ENCODE measurements at regions of chr16 and their contacts with region 1.

Region 1: GRCh38 chr16:53829186-53829747 is 125.3 kb downstream of the FTO start:
- DNase-seq: no peak
- H3K4me3 ChIP-seq: no peak overlapping the region
- H3K27ac ChIP-seq: peak overlapping the region; percentile 54 to 74
- H3K4me1 ChIP-seq: peaks cover 0 to 10% of the 10 kb centered on the region in 2 donors
- H3K27me3 ChIP-seq: no peaks in the 10 kb centered on the region
- CTCF ChIP-seq: no peak
- POLR2A ChIP-seq: no peak

Region 2: DNA sequence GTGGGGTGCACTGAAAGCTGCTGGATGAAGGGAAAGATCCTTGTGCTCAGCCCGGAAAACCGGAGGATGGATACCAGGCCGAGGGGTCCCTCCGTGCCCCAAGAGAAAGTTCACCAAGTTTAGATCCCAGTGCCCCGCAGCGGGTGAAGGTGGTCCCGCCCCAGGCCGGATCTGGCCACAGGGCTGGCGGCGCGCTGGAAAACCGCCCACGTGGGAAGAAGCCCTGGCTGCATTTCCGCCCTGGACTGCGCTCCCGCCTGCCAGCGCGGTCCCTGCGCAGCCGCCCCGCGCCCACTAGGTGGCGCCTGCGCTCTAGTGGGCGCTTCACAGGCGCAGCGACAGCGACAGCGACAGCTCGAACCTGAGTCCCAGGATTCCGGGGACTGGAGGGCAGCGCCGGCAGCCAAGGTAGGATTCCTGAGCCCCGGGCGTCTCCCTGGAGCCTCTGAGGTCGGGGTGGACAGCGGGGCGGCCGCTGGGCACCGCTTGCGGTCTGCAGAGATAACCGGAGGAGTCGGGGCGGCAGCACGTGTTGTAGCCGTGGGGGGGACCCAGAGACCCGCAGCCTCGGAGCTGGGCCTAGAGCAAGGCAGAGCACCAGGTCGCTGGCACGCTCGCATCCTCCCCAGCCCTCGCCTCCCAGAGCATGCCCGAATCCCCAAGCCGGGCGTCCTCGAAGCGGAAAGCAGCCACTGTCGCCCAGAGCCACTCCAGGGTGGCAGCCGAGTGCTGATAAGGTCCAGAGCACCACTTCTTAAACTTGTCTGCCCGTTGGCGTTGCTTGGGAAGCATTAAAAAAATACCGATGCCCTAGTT is 774.4 kb before region 1 on chr16 and contains the start of gene CHD9:
- intact Hi-C with region 1: loop called (anchors 5 kb)
- DNase-seq: peak; percentile 68 to 72
- H3K4me3 ChIP-seq: peak within 1 kb of the TSS; percentile 62 to 77 (median 76)
- H3K27ac ChIP-seq: peak within 1 kb of the TSS; percentile 91 to 92
- H3K4me1 ChIP-seq: no peaks in the 10 kb centered on the region
- H3K27me3 ChIP-seq: no peaks in the 10 kb centered on the region
- CTCF ChIP-seq: peak; percentile 97 to 98 (median 98)
- POLR2A ChIP-seq: no peak
- total RNA-seq, gene CHD9: 93.8 to 160 (median 158) TPM

Region 3: DNA sequence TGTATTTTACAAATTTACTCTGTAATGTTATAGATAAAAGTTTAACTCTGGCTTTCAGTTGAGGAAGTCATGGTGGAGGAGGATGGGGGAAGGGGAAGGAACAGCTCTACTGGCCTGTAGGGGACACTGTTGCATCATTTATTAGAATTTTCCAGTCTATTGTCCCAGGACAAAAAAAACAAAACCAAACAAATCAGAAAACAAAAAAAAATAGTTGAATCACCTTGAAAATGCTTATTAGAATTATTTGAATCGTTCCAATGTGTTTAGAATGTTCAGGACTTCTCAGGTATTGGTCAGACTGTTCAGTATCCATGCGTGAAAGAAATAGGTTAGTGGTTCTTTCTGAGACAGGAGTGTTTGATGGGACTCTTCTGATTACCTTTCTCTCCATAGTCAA is 116.7 kb after region 1 on chr16:
- intact Hi-C with region 1: no loop called
- DNase-seq: no peak
- H3K4me3 ChIP-seq: no peak overlapping the region
- H3K27ac ChIP-seq: peak overlapping the region; percentile 46 to 65
- H3K4me1 ChIP-seq: no peaks in the 10 kb centered on the region
- H3K27me3 ChIP-seq: no peaks in the 10 kb centered on the region
- CTCF ChIP-seq: peak; percentile 79 to 89 (median 85)
- POLR2A ChIP-seq: no peak

Measured in breast epithelium (tissue), 4 donors.